ENCODE measurements at regions of chr12 and their contacts with region 1.

Region 1: DNA sequence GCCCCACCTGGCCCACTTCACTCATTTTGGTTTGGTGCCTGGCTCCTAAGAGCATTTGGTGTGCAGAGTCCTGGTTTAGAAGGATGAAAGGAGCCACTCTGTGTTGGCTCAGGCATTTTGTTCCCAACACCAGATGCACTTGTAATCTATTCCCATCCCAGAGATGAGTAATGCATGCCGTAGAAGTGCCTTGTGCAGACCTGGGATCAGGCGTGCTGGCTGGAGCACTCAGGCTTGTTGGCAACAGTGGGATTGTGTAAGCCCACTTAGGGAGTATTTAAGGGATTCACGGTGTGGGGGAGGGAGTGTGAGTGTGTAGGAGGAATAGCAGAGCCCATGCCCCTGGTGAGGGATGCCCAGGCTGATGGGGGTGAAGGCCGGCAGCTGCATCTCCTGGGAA is 501.5 kb upstream of the TBX3 start:
- DNase-seq: no peak

Region 2: DNA sequence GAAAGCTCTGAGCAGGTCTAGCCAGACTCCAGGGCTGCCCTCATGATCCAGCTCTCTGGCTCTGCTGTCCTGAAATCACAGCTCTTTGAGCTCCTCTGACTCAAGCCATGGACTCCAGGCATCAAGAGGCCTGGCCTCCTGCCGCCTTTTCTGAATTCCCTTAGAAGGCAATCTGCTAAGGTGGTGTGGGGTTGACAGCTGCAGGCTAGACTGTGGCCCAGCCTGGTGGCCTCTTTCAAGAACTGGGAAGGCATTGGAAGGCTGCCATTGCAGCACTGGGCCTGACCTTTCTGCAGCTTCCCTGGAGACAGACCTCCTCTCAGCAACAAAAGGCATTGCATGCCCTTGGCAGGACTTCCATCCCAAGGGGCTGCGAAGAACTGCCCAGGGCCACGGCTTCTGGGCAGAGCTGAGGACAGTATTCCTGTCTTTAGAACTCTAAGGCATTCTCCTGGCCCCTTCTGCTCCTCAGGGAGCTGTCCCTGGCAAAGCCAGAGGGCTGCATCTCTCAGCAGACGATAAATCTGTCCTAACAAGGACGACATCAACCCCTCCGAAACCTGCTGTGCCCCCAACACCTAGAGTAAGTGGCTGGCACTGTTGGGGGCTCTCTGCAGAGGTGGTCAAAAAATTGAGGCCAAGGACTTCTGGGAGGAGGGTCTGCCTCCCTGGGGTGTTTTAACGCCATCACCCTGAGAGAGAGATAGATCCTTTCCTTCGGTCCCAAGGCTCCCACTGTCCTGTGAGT is 1335.0 kb before region 1 on chr12:
- intact Hi-C with region 1: no loop called
- DNase-seq: peak; percentile 93

Region 3: GRCh38 chr12:114030451-114030850 is 1155.1 kb before region 1 on chr12:
- intact Hi-C with region 1: loop called in 1 of 2 experiments (anchors 10 kb)
- DNase-seq: no peak

Region 4: DNA sequence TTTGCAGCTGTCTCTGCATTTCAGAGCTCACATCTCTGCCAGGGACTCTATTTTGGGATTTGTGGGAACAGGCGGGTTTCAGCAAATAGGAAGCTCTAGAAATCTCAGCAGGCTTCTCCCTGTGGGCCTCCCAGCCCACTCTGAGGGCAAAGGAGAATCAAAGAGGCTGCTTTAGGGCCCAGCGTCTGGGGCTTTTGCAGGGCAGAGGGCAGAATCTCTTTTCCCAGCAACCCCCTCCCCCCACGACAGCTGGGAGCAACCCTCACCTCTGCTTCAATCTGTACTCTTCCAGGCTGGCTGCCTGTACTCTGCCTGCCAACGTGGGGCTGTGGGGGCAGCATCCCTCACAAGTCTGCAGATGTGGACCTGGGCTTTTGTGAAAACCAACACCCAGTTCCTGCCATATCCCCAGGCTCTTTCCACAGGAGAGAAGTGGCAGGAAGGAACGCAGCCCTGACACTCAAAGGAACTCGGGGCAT is 28.1 kb after region 1 on chr12:
- intact Hi-C with region 1: no loop called
- DNase-seq: no peak

Region 5: GRCh38 chr12:116803013-116803736 is 1617.7 kb after region 1 on chr12:
- intact Hi-C with region 1: no loop called
- DNase-seq: no peak

Measured in posterior vena cava (tissue), 2 donors.